ENCODE measurements at regions of chr2 and their contacts with region 1.

Region 1: DNA sequence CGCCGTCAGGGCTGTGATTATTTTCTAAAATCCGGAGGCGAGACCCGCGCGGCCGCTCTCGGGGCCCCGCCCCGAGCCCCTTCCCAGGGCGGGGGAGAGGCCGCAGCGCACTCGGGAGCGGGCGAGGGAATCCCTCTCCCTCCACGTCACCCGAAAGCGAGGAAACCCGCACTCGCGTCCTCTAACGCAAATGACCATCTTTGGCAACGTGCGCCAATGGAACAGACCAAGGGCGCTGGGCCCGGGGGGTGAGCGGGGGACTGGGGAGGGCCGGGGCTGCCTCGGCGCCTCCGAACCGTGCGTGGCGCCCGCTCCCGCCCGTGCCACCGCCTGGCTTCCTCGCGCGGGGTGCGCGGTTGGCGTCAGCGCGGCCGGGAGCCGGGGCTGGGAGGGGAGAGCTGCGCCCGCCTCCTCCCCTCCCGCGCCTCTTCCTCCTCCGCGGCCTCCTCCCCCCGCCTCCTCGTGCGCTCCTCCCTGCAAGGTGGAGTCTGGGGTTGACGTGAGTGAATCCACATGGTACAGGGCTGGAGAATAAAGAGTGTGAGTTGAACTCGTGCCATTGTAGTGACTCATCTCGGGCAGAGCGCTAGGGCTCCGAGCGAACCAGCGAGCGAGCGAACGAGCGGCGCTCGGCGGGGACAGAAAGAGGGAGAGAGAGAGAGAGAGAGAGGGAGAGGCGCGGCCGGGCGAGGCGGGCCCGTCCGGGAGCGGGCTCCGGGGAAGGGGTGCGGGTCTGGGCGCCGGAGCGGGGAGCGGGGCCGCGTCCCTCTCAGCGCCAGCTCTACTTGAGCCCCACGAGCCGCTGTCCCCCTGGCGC is at the start of gene FOSL2:
- DNase-seq: peak; percentile 97
- H3K4me3 Mint-ChIP-seq: peak within 1 kb of the TSS; percentile 94
- H3K27ac Mint-ChIP-seq: peak within 1 kb of the TSS; percentile 98
- H3K4me1 Mint-ChIP-seq: peaks cover 30% of the 10 kb centered on the region
- H3K27me3 Mint-ChIP-seq: peaks cover 2% of the 10 kb centered on the region
- total RNA-seq, gene FOSL2: 172 to 182 TPM

Region 2: DNA sequence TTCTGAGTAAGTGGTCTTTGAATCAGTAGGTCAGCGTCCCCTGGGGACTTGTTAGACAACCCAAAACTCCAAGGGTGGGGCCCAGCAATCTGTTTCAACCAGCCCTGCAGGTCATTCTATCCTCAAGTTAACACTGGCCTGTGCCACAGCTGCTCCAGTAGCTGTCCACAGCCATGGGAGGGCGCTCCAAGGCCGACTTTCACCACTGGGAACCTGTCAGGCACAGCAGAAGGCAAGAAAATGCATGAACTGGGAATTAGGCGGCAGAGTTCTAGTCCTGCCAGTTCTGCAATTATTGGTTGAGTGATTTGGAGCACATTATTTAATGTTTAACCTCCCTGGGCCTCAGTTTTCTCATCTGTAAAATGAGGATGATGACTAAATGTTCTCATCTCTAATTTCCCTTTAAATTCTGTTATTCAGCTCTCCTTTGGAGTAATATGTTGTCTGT is 638.3 kb before region 1 on chr2:
- CTCF ChIA-PET with region 1: interaction called, 7 read pairs
- POLR2A ChIA-PET with region 1: no interaction called
- intact Hi-C with region 1: loop called (anchors 2 kb)
- DNase-seq: peak; percentile 91
- H3K4me3 Mint-ChIP-seq: no peak overlapping the region
- H3K27ac Mint-ChIP-seq: peak overlapping the region; percentile 30
- H3K4me1 Mint-ChIP-seq: peaks cover 14% of the 10 kb centered on the region
- H3K27me3 Mint-ChIP-seq: peaks cover 10% of the 10 kb centered on the region

Region 3: DNA sequence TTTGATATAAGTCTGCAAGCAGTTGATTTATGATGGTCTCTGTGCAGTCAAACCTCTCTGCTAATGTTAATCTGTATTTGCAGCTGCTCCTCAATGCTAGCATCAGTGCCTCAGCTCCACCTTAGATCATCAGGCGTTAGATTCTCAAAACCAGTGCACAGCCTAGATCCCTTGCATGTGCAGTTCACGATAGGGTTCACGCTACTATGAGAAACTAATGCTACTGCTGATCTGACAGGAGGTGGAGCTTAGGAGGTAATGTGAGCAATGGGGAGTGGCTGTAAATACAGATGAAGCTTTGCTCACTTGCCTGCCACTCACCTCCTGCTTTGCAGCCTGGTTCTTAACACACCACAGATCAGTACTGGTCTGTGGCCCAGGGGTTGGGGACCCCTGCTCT is 520.7 kb before region 1 on chr2:
- CTCF ChIA-PET with region 1: no interaction called
- POLR2A ChIA-PET with region 1: no interaction called
- intact Hi-C with region 1: no loop called
- DNase-seq: no peak
- H3K4me3 Mint-ChIP-seq: no peak overlapping the region
- H3K27ac Mint-ChIP-seq: no peak overlapping the region
- H3K4me1 Mint-ChIP-seq: no peaks in the 10 kb centered on the region
- H3K27me3 Mint-ChIP-seq: no peaks in the 10 kb centered on the region

Region 4: DNA sequence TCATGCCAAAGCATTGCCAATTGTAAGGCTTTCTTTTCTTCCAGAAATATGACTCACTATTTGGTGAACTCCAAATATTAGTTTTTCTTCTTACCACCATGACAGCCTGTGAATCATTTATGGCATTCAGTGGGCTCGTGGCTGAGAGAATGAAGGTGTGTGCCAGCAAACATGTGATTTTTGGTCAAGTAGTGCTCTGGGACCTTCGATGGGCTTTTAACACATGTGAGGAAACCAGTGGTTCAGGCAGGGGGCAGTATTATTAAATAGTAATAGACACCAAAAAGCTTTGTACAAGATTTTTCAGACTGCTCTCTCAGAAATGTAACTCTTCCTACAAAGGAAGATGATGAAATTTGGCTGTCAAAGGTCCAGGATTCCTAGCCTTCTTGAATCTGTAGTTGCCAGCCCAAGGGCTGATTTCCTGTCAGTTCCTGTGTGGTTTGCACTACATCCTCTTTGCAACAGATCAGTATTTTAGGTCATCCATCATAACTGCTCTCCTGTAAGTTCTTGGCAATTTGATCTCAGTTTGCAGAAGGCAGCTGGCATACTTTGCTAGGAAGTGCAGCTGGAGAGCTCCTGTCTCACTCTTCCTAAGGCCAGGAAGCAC is 437.6 kb before region 1 on chr2:
- CTCF ChIA-PET with region 1: no interaction called
- POLR2A ChIA-PET with region 1: no interaction called
- intact Hi-C with region 1: loop called (anchors 2 kb)
- DNase-seq: peak; percentile 77
- H3K4me3 Mint-ChIP-seq: peak overlapping the region; percentile 42
- H3K27ac Mint-ChIP-seq: peak overlapping the region; percentile 86
- H3K4me1 Mint-ChIP-seq: peaks cover 84% of the 10 kb centered on the region
- H3K27me3 Mint-ChIP-seq: no peaks in the 10 kb centered on the region

Region 5: DNA sequence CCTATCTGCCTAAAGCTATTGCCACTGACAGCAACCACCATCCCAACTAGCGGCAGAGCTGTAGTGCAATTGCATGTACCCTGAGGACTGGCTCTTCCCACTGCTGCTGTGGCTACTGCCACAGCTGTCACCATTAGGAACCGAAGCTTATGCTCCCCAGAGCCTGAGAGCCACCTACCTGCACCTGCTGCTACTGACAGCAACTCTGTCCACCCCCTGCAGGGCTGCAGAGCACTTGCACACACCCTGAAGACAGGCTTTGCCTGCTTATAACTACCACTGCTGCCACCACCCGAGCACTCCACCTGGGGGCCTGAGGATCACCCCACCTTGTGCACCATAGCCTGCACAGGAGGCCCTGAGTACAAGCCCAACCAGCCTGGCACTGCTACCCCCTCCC is 217.5 kb before region 1 on chr2:
- CTCF ChIA-PET with region 1: no interaction called
- POLR2A ChIA-PET with region 1: no interaction called
- intact Hi-C with region 1: no loop called
- DNase-seq: no peak
- H3K4me3 Mint-ChIP-seq: no peak overlapping the region
- H3K27ac Mint-ChIP-seq: no peak overlapping the region
- H3K4me1 Mint-ChIP-seq: peaks cover 5% of the 10 kb centered on the region
- H3K27me3 Mint-ChIP-seq: no peaks in the 10 kb centered on the region

Region 6: DNA sequence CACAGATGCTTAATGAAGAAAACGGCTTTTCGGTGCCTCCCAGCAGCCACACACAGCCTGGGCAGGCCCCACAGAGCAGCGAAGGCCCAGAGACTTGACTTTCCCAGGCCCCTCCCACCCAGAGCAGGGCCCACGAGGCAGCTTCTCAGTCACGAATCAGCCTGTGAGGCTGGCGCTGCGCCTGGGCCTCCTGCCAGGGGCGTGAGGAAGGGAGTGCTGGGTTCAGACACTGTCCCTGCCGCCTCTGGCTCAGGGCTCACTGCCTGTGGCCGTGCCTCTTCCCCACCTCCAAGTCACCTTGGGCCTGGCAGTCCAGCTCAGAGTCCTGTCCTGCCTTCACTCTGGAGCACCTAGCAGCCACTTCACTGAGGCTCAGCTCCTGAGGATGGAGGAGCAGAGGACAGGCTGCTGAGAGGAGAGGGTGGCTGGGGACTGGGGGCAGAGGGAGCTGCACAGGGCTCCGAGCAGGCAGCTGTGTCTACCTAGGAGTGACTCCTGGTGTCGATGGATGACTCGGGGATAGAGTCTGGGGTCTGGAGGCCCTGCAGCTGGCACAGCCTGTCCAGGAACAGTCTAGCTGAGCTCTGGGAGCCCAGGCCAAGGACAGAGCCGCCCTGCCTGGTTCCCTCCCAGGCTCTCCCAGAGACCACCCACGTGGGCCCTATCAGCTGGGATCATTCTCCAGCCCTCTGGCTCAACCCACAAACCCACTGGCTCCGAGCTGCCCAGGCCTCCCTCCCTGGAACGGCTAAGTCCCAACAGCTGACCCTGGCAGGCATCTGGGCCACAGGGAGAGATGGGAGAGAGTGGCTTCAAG is 36.2 kb before region 1 on chr2:
- CTCF ChIA-PET with region 1: no interaction called
- POLR2A ChIA-PET with region 1: interaction called, 19 read pairs
- intact Hi-C with region 1: loop called (anchors 1 kb)
- DNase-seq: peak; percentile 50
- H3K4me3 Mint-ChIP-seq: no peak overlapping the region
- H3K27ac Mint-ChIP-seq: peak overlapping the region; percentile 46
- H3K4me1 Mint-ChIP-seq: peaks cover 45% of the 10 kb centered on the region
- H3K27me3 Mint-ChIP-seq: no peaks in the 10 kb centered on the region

Region 7: DNA sequence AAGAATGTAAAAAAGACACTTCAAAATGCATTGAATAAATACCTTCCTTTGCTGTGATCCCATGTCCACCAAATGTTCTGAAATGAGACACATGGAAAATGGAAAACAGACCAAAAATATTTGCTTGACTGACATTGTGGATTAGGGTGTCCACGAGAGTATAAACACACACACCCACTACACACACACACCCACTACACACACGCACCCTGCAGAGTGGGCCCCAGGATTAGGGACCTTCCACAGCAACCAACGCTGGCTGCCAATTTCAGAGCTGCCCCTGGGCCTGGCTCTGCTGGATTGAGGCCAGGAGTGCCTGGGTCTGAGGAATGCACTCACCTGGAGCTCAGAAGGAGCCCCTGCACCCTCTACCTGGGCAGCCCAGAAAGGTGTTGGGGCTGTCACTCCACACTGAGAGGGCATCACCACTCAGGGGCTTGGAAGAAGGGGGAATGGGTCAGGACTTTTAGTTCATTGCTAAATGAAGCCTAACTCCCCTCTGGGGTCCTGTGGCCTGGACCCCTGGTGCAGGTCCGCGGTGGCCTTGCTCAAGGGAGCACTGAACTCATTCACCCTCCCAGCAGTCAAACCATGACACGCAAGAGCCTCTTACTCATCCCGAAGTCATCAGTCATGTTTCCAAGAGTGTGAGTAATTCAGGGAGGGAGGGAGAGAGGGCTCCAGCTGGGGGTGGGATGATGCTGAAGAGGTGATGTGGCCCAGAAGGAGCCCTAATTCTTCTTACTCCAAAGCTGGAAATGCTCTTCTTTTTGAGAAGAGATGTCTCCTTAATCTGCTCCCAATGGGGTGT is 53.1 kb after region 1 on chr2:
- CTCF ChIA-PET with region 1: interaction called, 8 read pairs
- POLR2A ChIA-PET with region 1: interaction called, 37 read pairs
- intact Hi-C with region 1: loop called (anchors 1 kb)
- DNase-seq: peak; percentile 86
- H3K4me3 Mint-ChIP-seq: peak overlapping the region; percentile 14
- H3K27ac Mint-ChIP-seq: peak overlapping the region; percentile 99
- H3K4me1 Mint-ChIP-seq: peaks cover 82% of the 10 kb centered on the region
- H3K27me3 Mint-ChIP-seq: peaks cover 4% of the 10 kb centered on the region

Region 8: DNA sequence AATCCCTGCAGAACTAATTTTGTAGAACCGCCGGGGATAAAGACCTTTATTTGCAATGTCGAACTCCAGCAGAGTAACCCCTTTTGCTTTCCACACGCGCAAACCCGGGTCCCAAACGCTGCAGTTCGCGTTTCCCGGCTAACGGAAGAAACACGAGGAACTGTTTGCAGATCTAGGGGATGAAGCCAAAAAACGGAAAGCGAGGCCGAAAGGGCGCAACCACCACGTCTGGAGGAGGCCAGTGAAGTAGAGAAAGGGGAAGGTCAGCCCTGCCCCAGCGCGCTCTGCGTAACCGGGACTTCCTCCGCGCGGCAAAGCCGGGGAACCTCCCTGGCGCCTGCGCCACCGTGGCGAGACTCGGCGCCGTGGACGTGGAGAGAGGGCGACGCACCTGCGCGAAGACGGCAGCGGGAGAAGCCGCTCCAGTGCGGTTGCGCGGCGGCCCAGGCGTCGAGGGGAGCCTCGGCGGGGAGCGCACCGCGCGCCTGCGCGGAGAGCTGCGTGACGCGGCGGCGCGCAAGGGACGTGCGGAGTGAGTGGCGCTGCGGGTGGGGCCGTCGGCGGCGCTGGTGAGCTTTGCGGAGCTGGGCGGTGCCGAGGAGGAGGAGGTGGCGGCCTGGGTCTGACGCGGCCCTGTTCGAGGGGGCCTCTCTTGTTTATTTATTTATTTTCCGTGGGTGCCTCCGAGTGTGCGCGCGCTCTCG is 358.9 kb after region 1 on chr2 and contains the start of gene PPP1CB:
- CTCF ChIA-PET with region 1: interaction called, 3 read pairs
- POLR2A ChIA-PET with region 1: no interaction called
- intact Hi-C with region 1: loop called (anchors 2 kb)
- DNase-seq: peak; percentile 96
- H3K4me3 Mint-ChIP-seq: peak within 1 kb of the TSS; percentile 85
- H3K27ac Mint-ChIP-seq: peak within 1 kb of the TSS; percentile 96
- H3K4me1 Mint-ChIP-seq: peaks cover 51% of the 10 kb centered on the region
- H3K27me3 Mint-ChIP-seq: no peaks in the 10 kb centered on the region
- total RNA-seq, gene PPP1CB: 238 to 256 TPM